Calu3 (cell line): ENCODE measurements at regions of chr18 and their contacts with region 1.

Region 1: DNA sequence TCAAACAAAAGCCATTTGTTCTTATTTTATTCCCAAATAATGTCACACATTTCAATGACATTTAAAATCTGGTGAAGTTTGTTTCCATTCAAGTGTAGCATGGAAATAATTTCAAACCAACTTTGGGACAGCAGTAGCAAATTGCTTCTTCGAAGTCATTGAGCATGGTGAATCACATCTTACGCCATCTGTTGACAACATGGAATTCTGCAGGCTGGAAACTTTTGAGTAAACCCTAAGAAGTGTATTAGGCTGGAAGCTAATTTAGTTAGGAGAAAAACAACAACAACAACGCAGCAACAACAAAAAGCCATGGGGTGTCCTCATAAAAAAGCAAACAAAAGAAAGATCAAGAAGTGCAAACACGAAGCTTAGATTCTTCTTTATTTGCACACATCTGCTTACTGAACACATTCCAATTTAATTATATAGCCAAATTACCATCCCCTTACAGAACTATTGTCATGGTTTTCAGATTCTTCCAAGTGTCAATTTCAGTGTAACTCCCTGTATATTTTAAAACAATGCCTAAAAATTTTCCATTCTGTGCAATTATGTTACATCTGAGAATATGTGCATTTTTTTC is 659.0 kb upstream of the CDH7 start:
- DNase-seq: peak; percentile 32
- H3K4me3 Mint-ChIP-seq: no peak overlapping the region
- H3K27ac Mint-ChIP-seq: no peak overlapping the region
- H3K4me1 Mint-ChIP-seq: no peaks in the 10 kb centered on the region
- H3K27me3 Mint-ChIP-seq: no peaks in the 10 kb centered on the region
- CTCF ChIP-seq: peak; percentile 49

Region 2: DNA sequence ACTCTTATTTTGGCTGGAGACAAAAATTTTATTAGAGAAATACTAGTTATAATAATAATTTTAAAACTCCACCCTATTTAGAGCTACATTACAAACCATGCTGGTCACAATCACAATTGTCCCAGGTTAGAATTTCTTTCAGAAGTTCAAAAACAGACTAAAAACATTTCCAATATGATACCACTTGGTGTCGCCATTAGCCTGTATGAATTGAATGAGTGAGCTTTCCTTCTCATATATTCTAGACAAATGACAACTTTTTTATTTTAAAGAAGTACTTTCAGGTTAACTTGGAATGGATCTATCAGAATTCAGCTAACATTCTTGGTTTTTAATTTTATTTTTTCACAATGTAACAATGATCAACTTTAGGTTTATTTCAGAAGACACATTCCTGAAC is 1074.0 kb before region 1 on chr18:
- CTCF ChIA-PET with region 1: no interaction called
- intact Hi-C with region 1: loop called (anchors 5 kb)
- DNase-seq: no peak
- H3K4me3 Mint-ChIP-seq: no peak overlapping the region
- H3K27ac Mint-ChIP-seq: no peak overlapping the region
- H3K4me1 Mint-ChIP-seq: peaks cover 22% of the 10 kb centered on the region
- H3K27me3 Mint-ChIP-seq: no peaks in the 10 kb centered on the region
- CTCF ChIP-seq: no peak

Region 3: DNA sequence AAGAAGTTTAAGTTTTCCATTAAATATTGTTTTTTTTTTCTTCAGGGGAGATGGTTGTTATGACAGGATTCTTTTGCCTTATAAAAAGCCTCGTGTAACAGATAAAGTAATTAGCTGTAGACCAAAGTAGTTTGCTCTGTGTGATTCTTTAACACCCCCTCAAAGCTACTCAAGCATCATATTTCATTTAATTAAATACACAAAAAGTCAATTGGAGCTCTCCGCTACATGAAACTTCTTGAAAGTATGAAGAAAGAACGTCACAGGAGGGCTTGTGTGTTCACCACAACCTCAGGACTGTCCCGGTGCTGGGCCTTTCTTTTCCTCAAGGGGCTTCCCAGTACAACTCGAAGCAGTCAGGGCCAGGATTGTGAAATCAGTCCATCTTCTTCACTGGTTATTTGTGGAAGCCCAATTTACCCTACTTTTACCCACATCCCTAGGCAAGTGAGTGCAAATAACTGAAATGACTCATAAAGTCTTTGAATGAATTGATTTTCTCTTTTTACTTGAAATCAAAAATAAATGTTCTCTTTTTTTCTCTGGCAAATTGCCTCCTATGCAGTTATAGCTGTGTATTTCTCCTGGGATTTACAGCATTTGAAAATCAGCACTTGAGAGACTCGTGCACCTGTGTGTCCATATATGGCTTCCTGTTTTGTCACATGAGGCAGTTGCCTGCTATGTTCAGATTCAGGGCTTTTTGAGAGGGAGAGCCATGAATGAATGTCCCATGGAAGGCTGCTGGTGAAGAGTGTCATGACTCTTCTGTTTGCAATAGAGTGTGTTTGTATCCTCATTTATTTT is 991.5 kb before region 1 on chr18:
- CTCF ChIA-PET with region 1: no interaction called
- intact Hi-C with region 1: loop called (anchors 5 kb)
- DNase-seq: no peak
- H3K4me3 Mint-ChIP-seq: peak overlapping the region; percentile 22
- H3K27ac Mint-ChIP-seq: no peak overlapping the region
- H3K4me1 Mint-ChIP-seq: peaks cover 11% of the 10 kb centered on the region
- H3K27me3 Mint-ChIP-seq: no peaks in the 10 kb centered on the region
- CTCF ChIP-seq: no peak

Region 4: DNA sequence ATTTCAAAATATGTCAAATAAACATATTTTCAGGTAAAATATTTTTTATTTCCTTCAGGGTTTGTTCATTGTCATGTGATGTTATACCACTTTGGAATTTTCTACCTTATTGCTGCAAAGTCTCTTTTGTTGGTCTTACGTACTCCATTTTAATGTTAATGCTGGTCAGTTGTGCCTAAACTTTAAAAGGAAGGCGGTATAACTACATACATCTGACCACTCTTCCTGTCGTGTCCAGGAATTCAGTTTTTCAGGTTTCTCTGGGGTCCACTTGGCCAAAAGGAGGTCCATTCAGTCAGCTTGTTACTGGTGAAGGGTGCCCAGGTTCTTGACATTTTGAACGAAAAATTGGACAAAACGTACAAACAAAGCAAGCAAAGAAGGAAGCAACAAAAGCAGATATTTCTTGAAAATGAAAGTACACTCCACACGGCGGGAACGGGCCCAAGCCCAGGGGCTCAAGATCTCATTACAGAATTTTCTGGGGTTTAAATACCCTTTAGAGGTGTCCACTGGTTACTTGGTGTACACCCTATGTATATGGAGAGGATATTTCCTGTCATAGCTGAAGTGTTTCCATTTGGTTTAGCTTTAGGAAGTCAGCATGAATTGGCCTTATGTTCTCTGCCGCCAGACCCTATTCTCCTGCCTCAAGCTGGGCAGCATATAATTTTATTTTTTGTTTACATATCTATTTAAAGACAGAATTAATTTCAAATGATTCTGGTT is 187.3 kb after region 1 on chr18:
- CTCF ChIA-PET with region 1: no interaction called
- intact Hi-C with region 1: no loop called
- DNase-seq: no peak
- H3K4me3 Mint-ChIP-seq: no peak overlapping the region
- H3K27ac Mint-ChIP-seq: no peak overlapping the region
- H3K4me1 Mint-ChIP-seq: no peaks in the 10 kb centered on the region
- H3K27me3 Mint-ChIP-seq: no peaks in the 10 kb centered on the region
- CTCF ChIP-seq: no peak